WTC11 (cell line): ENCODE measurements at regions of chr6 and their contacts with region 1.

Region 1: DNA sequence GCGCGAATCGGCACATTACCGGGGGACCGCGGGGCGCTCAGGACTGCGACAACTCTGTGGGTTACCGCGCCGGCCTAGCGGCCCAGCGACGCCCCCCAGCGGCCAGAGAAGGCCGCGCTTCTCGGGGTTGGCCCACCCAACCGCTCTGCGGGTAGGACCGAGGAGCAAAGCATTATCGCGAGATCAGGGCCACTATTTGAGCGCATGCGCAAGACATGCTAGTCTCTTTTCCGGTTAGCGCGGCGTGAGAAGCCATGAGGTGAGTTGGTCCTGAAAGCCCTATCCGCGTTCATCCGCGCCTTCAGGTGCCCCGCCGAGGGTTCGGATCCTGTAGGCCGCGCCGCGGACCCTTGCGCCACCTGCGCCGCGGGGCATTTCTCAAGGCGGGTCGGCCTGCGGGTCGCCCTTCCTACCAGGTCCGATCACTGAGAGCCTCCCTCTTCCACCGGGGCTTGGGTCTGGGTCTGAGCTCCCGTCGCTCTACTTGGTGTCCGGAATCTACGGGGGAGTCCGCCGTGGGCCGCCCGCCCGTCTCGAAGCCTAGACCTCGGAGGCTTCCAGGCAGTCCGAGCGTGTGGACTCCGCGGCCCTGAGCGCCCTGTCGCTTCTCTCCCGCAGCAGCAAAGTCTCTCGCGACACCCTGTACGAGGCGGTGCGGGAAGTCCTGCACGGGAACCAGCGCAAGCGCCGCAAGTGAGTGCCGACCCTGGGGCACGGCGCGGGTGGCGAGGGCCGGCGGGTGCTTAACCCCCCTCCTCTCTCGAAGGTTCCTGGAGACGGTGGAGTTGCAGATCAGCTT is at the start of gene RPL10A:
- DNase-seq: peak; percentile 95
- ATAC-seq: peak; percentile 71
- H3K4me3 Mint-ChIP-seq: peak within 1 kb of the TSS; percentile 95
- H3K27ac Mint-ChIP-seq: peak within 1 kb of the TSS; percentile 97
- H3K4me1 Mint-ChIP-seq: peaks cover 45% of the 10 kb centered on the region
- H3K27me3 Mint-ChIP-seq: peaks cover 13% of the 10 kb centered on the region
- CTCF ChIP-seq: peak; percentile 93
- total RNA-seq, gene RPL10A: 1,829 to 2,044 TPM (median 2,031 TPM) in 3 replicates

Region 2: DNA sequence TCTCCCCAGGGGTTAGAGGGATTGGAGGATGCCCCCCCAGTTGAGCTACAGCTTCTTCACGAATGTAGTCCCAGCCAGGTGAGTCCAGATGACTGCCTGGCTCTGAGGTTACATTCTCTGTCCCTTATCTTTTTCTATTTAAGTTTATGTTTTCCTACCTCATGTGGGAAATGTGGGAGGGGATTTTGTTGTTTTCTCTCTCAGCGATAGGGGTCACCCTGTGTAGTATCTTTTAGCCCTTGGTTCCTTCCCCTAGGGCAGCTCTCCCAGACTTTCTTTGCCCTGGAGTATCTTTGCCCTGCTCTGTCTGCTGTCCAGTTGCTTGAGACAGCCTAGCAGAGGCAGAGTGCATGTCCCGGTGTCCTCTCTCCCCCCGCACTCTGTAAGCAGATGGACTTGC is 10.5 kb before region 1 on chr6:
- CTCF ChIA-PET with region 1: interaction called, 10 read pairs
- POLR2A ChIA-PET with region 1: interaction called, 6 read pairs
- DNase-seq: no peak
- ATAC-seq: peak; percentile 67
- H3K4me3 Mint-ChIP-seq: no peak overlapping the region
- H3K27ac Mint-ChIP-seq: no peak overlapping the region; the same call in 1 of the 2 replicates
- H3K4me1 Mint-ChIP-seq: peaks cover 25% of the 10 kb centered on the region
- H3K27me3 Mint-ChIP-seq: peaks cover 3% of the 10 kb centered on the region
- CTCF ChIP-seq: no peak

Region 3: GRCh38 chr6:35489995-35490733 is 21.8 kb after region 1 on chr6:
- CTCF ChIA-PET with region 1: interaction called, 4 read pairs
- POLR2A ChIA-PET with region 1: interaction called, 54 read pairs
- DNase-seq: peak; percentile 87
- ATAC-seq: peak; percentile 16
- H3K4me3 Mint-ChIP-seq: peak overlapping the region; percentile 72
- H3K27ac Mint-ChIP-seq: peak overlapping the region; percentile 97
- H3K4me1 Mint-ChIP-seq: peaks cover 80% of the 10 kb centered on the region
- H3K27me3 Mint-ChIP-seq: peaks cover 4% of the 10 kb centered on the region
- CTCF ChIP-seq: no peak

Region 4: GRCh38 chr6:35496841-35497570 is 28.6 kb after region 1 on chr6 and contains the start of gene TEAD3:
- CTCF ChIA-PET with region 1: interaction called, 9 read pairs
- POLR2A ChIA-PET with region 1: interaction called, 38 read pairs
- DNase-seq: peak; percentile 89
- ATAC-seq: peak; percentile 38
- H3K4me3 Mint-ChIP-seq: peak within 1 kb of the TSS; percentile 78
- H3K27ac Mint-ChIP-seq: peak within 1 kb of the TSS; percentile 88
- H3K4me1 Mint-ChIP-seq: peaks cover 64% of the 10 kb centered on the region
- H3K27me3 Mint-ChIP-seq: peaks cover 23% of the 10 kb centered on the region
- CTCF ChIP-seq: no peak
- total RNA-seq, gene TEAD3: 32.0 to 34.3 TPM (median 33.9 TPM) in 3 replicates